ENCODE measurements at regions of chr10 and their contacts with region 1.

Region 1: GRCh38 chr10:89122433-89123051 is 84.6 kb downstream of the CH25H start:
- DNase-seq: peak; percentile 76 to 87 (median 83)
- H3K4me3 ChIP-seq: peak overlapping the region in 1 of 3 experiments; percentile 34
- H3K4me3 Mint-ChIP-seq: peak overlapping the region in 1 of 2 donors; percentile 81
- H3K27ac ChIP-seq: peak overlapping the region; percentile 45 to 94
- H3K27ac Mint-ChIP-seq: peak overlapping the region; percentile 98 to 100 (median 99)
- H3K4me1 ChIP-seq: peaks cover 34 to 38% of the 10 kb centered on the region in 2 donors
- H3K4me1 Mint-ChIP-seq: peaks cover 39% of the 10 kb centered on the region
- H3K27me3 ChIP-seq: peaks cover 0 to 13% of the 10 kb centered on the region in 2 donors
- H3K27me3 Mint-ChIP-seq: peaks cover 0 to 9% (median 2%) of the 10 kb centered on the region in 3 donors
- CTCF ChIP-seq: no peak

Region 2: GRCh38 chr10:88990384-88991160 is 132.0 kb before region 1 on chr10 and contains the start of gene FAS:
- intact Hi-C with region 1: loop called in 1 of 2 experiments (anchors 5 kb)
- DNase-seq: peak; percentile 76 to 98 (median 83)
- H3K4me3 ChIP-seq: peak within 1 kb of the TSS; percentile 76 to 86 (median 82)
- H3K4me3 Mint-ChIP-seq: peak within 1 kb of the TSS; percentile 99
- H3K27ac ChIP-seq: peak within 1 kb of the TSS; percentile 91 to 95
- H3K27ac Mint-ChIP-seq: peak within 1 kb of the TSS; percentile 94 to 99 (median 99)
- H3K4me1 ChIP-seq: peaks cover 53 to 68% of the 10 kb centered on the region in 2 donors
- H3K4me1 Mint-ChIP-seq: peaks cover 65% of the 10 kb centered on the region
- H3K27me3 ChIP-seq: no peaks in the 10 kb centered on the region
- H3K27me3 Mint-ChIP-seq: peaks cover 0 to 4% (median 0%) of the 10 kb centered on the region in 3 donors
- CTCF ChIP-seq: peak; percentile 18
- polyA plus RNA-seq, gene FAS: 27.3 to 28.9 (median 27.9) TPM

Region 3: DNA sequence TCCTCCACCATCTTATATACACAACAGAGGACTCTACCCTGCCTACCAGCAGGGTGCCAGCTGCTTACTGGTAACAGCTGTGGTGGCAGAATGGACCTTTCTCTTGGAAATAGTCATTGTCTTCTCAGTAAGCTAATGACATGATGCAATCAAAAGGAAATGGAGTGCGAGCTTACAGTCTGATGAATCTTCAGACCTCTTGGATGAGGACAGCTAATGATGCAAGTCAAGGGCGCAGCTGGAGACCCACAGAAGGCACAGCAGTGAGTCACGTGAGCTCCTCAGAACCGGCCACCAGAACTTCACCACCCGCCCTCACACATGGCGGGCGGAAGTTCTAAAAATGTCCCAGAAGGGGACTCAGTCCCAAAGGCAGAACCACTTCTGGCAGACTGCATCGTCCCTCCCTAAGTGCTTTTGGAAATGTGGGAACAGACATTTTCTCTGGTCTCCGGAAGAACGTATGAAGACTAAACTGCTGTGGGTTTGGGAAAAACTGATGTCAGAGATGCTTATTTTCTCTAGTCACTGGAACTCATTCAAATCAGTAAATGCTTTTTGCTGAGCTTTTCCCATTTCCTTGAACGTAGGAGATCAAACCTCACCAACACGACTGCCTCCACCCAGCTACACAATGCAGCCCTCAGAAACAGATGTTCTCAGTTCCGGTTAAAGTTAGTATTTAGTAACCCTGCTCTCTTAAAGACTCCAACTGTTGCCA is 35.6 kb before region 1 on chr10:
- intact Hi-C with region 1: loop called (anchors 2 to 5 kb)
- DNase-seq: peak; percentile 86 to 92 (median 91)
- H3K4me3 ChIP-seq: no peak overlapping the region
- H3K4me3 Mint-ChIP-seq: no peak overlapping the region
- H3K27ac ChIP-seq: peak overlapping the region in 1 of 2 donors; percentile 58
- H3K27ac Mint-ChIP-seq: peak overlapping the region in 2 of 7 donors; percentile 39 to 85
- H3K4me1 ChIP-seq: peaks cover 41 to 44% of the 10 kb centered on the region in 2 donors
- H3K4me1 Mint-ChIP-seq: peaks cover 20% of the 10 kb centered on the region
- H3K27me3 ChIP-seq: no peaks in the 10 kb centered on the region
- H3K27me3 Mint-ChIP-seq: no peaks in the 10 kb centered on the region
- CTCF ChIP-seq: peak; percentile 41

Region 4: GRCh38 chr10:89147256-89147655 is 24.7 kb after region 1 on chr10:
- intact Hi-C with region 1: no loop called
- DNase-seq: no peak
- H3K4me3 ChIP-seq: no peak overlapping the region
- H3K4me3 Mint-ChIP-seq: no peak overlapping the region
- H3K27ac ChIP-seq: no peak overlapping the region
- H3K27ac Mint-ChIP-seq: no peak overlapping the region
- H3K4me1 ChIP-seq: no peaks in the 10 kb centered on the region
- H3K4me1 Mint-ChIP-seq: peaks cover 3% of the 10 kb centered on the region
- H3K27me3 ChIP-seq: no peaks in the 10 kb centered on the region
- H3K27me3 Mint-ChIP-seq: peaks cover 0 to 7% (median 4%) of the 10 kb centered on the region in 3 donors
- CTCF ChIP-seq: no peak

Region 5: GRCh38 chr10:89183571-89183970 is 61.0 kb after region 1 on chr10:
- intact Hi-C with region 1: no loop called
- DNase-seq: no peak
- H3K4me3 ChIP-seq: no peak overlapping the region
- H3K4me3 Mint-ChIP-seq: no peak overlapping the region
- H3K27ac ChIP-seq: no peak overlapping the region
- H3K27ac Mint-ChIP-seq: no peak overlapping the region
- H3K4me1 ChIP-seq: no peaks in the 10 kb centered on the region
- H3K4me1 Mint-ChIP-seq: peaks cover 5% of the 10 kb centered on the region
- H3K27me3 ChIP-seq: no peaks in the 10 kb centered on the region
- H3K27me3 Mint-ChIP-seq: peaks cover 0 to 6% (median 2%) of the 10 kb centered on the region in 3 donors
- CTCF ChIP-seq: no peak